Motor neuron (in vitro differentiated cells): ENCODE measurements at regions of chr4 and their contacts with region 1.

Region 1: DNA sequence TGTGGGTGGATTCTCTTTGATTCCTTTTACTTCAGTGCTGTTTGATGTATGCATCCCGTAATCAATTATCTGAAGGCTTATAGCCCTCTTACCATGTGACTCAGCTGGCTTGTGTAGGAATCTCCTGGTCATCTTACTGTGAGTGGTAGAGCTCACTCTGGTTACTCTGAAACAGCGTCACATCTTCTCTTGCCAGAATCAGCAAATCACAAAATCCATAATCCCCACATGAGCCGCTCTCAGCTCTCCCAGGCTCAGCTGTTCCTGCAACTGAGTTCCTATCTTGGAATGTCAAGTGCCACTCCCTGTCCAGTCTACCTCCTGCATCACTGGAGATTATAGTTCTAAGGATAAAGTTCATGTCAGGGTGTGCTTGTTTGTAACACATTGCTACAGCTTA is 278.0 kb downstream of the FBXO8 start:
- ATAC-seq: peak in 7 of 8 experiments; percentile 46 to 91 (median 64)
- H3K4me3 ChIP-seq: no peak overlapping the region
- H3K27ac ChIP-seq: no peak overlapping the region
- H3K4me1 ChIP-seq: peaks cover 0 to 3% of the 10 kb centered on the region in 2 donors

Region 2: GRCh38 chr4:174318829-174319764 is 313.7 kb after region 1 on chr4:
- in situ Hi-C with region 1: loop called in 1 of 9 experiments (anchors 25 kb)
- ATAC-seq: no peak
- H3K4me3 ChIP-seq: no peak overlapping the region
- H3K27ac ChIP-seq: no peak overlapping the region
- H3K4me1 ChIP-seq: no peaks in the 10 kb centered on the region